Posterior vena cava (tissue), 2 donors: ENCODE measurements at regions of chr3 and their contacts with region 1.

Region 1: GRCh38 chr3:50211930-50212329 is 6.9 kb downstream of the SLC38A3 start:
- DNase-seq: no peak

Region 2: GRCh38 chr3:50015918-50016317 is 196.0 kb before region 1 on chr3:
- intact Hi-C with region 1: loop called in 1 of 2 experiments (anchors 2 kb)
- DNase-seq: no peak

Region 3: DNA sequence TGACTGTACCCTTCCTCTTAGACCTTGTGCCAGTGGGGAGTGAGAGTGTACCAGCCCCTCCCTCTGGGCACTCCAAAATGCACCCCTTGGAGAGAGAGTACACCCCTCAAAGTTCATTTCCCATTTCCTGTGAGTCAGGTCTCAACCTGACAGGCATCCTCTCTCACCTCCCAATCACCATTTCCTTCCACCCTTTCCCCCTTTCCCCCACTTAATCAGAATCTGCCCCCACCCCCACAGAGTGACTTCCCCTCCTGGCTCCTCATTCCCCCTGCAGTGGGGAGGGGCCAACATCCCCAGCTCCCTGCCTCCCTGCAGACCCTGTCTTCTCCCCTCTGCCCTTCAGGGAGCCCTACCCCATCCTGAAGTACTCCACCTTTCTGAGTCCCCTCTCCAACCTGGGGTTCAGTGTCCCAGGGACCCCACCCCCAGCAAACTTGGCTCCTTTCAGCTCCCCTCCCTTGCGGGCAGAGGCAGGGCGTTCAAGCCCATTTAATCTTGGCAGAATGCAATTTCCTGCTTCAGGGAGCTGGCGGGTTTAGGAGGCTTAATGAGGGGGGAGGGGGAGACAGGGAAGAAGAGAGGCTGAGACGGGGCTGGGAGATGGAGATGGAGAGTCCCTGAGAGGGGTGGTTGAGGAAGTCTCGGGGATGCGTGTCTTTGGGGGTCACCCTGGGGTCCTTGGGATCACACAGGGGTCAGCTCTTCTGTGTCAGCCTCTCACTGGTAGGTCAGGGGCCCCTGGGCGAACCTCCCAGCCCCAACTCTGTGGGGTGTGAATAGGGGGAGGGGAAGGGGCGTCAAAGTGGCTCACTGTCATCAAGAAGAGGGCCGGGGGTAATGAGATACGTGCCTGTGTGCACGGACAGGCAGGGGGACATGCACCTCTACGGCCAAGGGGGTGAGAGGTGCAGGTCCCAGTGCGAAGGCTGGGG is 73.4 kb before region 1 on chr3:
- intact Hi-C with region 1: no loop called
- DNase-seq: no peak

Region 4: DNA sequence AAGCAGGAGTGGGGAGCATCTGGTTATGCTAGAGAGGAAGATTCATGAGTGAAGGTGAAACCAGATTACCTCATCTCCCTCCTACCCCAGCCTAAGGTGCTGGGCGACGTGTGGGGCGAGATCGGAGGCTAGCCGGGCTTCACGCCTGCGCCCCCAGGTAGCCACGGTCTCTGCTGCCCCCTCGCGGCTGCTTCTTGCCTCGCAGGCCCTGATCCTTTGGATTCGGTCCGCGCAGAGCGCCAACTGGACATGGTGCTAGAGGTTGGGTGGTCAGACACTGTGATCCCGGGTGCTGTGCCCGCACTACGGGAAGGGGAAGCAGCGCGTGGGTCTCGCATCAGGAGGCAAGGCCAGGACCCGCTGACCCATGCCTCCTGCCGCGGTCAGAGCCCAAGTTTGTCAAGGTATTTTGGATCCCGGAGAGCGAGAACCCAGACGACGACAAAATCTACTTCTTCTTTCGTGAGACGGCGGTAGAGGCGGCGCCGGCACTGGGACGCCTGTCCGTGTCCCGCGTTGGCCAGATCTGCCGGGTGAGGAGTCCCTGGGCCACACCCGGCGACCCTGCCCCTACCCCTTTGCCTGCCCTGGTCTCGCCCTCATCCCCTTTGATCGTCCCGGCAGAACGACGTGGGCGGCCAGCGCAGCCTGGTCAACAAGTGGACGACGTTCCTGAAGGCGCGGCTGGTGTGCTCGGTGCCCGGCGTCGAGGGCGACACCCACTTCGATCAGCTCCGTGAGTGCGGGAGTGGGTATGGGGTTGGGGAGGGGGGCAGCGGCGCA is 61.2 kb after region 1 on chr3:
- intact Hi-C with region 1: no loop called
- DNase-seq: peak; percentile 96